ENCODE measurements at regions of chr2 and their contacts with region 1.

Region 1: DNA sequence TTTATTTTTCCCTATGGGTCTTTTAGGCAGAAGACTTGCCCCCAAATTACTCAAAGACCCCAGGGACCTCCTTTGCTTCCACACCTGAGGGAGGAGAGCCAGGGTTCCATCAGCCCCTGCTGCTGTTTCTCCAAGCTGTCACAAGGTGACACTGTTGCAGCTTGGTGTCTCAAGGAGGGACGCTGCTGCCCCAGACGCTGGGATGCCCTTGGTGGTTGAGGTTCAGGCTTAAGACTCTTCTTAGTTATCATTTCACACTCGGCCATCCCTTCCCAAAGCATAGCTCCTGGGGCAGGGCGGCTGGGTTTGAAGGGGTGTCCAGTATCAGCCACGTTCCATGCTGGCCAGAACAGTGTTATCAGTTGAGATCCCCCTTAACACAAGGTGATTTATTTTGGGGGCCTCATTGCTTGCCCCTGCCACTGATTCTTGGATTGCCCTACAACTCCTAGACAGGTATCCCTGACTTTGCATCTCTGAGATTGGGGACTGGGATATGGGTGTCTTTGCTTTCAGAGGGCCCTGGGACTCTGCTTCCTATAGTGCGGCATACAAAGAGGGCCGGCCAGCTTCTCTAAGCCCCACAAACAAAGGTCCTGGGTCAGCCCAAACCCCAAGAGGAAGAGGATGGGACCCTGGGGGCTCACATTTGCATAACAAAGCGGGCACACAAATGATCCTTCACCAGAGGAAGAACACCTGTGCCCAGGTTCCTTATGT is 22.7 kb downstream of the GPR55 start:
- DNase-seq: peak; percentile 19
- ATAC-seq: peak; percentile 90
- H3K4me3 Mint-ChIP-seq: no peak overlapping the region
- H3K27ac Mint-ChIP-seq: no peak overlapping the region
- H3K4me1 Mint-ChIP-seq: peaks cover 18% of the 10 kb centered on the region
- H3K27me3 Mint-ChIP-seq: no peaks in the 10 kb centered on the region
- CTCF ChIP-seq: no peak

Region 2: GRCh38 chr2:230847883-230848388 is 54.4 kb before region 1 on chr2:
- CTCF ChIA-PET with region 1: interaction called, 12 read pairs
- POLR2A ChIA-PET with region 1: no interaction called
- intact Hi-C with region 1: no loop called
- DNase-seq: peak; percentile 84
- ATAC-seq: peak; percentile 97
- H3K4me3 Mint-ChIP-seq: peak overlapping the region; percentile 50
- H3K27ac Mint-ChIP-seq: no peak overlapping the region
- H3K4me1 Mint-ChIP-seq: peaks cover 8% of the 10 kb centered on the region
- H3K27me3 Mint-ChIP-seq: peaks cover 22% of the 10 kb centered on the region
- CTCF ChIP-seq: peak; percentile 24

Region 3: DNA sequence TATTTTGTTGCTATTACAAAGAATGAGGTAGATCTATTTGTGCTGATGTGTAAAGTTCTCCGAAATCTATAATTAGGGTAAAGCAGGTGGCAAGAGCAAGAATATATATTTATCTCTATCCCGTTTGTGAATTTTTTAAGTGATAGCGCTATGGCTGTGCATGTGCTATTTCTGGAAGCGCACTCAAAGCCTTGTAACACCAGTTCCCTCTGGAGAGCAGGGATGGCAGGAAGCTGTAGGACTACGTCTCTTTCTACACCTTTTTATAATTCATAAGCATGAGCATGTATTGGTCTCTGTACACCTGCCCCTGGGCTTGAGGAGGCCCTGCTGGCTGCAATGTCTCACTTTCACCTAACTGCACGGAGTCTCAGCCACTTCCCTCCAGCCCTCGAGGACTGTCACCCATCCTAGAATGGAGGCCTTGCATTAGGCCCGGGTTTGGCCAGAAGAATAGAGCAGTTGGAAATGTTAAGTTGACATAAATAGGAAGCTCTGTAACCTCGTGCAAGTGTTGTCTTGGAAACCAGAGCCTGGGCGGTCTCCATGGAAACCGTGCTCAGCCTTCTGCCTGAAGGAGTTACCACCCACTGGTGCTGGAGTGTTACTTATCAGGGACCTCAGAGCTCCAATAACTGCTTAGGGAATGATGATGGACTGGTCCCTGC is 16.7 kb before region 1 on chr2:
- CTCF ChIA-PET with region 1: no interaction called
- POLR2A ChIA-PET with region 1: no interaction called
- intact Hi-C with region 1: no loop called
- DNase-seq: no peak
- ATAC-seq: peak; percentile 45
- H3K4me3 Mint-ChIP-seq: no peak overlapping the region
- H3K27ac Mint-ChIP-seq: no peak overlapping the region
- H3K4me1 Mint-ChIP-seq: peaks cover 23% of the 10 kb centered on the region
- H3K27me3 Mint-ChIP-seq: peaks cover 3% of the 10 kb centered on the region
- CTCF ChIP-seq: no peak

Region 4: GRCh38 chr2:230924470-230925341 is 22.4 kb after region 1 on chr2 and contains the start of gene GPR55:
- CTCF ChIA-PET with region 1: interaction called, 4 read pairs
- POLR2A ChIA-PET with region 1: no interaction called
- intact Hi-C with region 1: loop called (anchors 2 kb)
- DNase-seq: peak; percentile 18
- ATAC-seq: peak; percentile 81
- H3K4me3 Mint-ChIP-seq: peak within 1 kb of the TSS; percentile 80
- H3K27ac Mint-ChIP-seq: peak within 1 kb of the TSS; percentile 79
- H3K4me1 Mint-ChIP-seq: peaks cover 40% of the 10 kb centered on the region
- H3K27me3 Mint-ChIP-seq: no peaks in the 10 kb centered on the region
- CTCF ChIP-seq: no peak
- total RNA-seq, gene GPR55: 4.5 and 6.3 TPM in 2 replicates

Region 5: DNA sequence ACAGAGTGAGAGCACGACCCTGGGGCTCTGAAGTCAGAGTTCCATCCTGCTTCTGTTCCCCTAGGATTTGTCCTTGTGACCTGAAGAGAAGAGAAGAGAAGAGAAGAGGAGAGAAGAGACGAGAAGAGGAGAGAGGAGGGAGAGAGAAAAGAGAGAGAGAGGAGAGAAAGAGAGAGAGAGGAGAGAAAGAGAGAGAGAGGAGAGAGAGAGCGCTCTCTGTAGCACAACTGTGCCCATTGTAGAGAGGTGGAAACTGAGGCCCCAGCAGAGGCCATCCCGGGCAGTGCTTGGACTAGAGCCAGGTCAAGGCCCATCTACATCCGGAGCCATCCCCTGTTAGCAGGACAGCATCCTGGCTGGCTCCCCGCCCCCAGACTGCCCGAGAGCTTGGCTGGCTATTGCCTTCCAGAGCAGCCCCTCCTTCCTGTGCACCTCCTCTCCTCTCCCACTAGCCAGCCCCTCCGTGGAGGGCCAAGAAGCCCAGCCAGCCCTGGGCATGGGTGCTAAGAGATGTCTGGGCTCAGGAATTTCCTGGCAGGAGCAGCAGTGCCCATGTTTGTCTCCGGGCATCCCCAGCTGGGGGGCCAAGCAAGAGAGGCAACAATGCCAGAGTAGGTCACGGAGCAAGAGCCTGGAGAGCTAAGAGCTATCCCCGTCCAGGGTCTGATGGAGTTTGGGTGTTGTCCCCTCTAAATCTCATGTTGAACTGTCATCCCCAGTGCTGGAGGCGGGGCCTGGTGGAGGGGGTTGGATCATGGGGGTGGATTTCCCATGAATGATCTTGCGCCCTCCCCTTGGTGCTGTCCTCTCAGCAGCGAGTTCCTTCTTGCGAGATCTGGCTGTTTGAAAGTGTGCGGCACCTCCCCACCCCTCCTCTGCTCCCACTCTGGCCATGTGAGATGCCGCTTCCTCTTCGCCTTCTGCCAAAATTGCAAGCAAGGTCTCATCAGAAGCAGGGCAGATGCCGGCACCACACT is 40.9 kb after region 1 on chr2:
- CTCF ChIA-PET with region 1: no interaction called
- POLR2A ChIA-PET with region 1: no interaction called
- intact Hi-C with region 1: loop called (anchors 5 kb)
- DNase-seq: no peak
- ATAC-seq: peak; percentile 83
- H3K4me3 Mint-ChIP-seq: peak overlapping the region; percentile 70
- H3K27ac Mint-ChIP-seq: peak overlapping the region; percentile 80
- H3K4me1 Mint-ChIP-seq: peaks cover 21% of the 10 kb centered on the region
- H3K27me3 Mint-ChIP-seq: peaks cover 11% of the 10 kb centered on the region
- CTCF ChIP-seq: no peak

Region 6: DNA sequence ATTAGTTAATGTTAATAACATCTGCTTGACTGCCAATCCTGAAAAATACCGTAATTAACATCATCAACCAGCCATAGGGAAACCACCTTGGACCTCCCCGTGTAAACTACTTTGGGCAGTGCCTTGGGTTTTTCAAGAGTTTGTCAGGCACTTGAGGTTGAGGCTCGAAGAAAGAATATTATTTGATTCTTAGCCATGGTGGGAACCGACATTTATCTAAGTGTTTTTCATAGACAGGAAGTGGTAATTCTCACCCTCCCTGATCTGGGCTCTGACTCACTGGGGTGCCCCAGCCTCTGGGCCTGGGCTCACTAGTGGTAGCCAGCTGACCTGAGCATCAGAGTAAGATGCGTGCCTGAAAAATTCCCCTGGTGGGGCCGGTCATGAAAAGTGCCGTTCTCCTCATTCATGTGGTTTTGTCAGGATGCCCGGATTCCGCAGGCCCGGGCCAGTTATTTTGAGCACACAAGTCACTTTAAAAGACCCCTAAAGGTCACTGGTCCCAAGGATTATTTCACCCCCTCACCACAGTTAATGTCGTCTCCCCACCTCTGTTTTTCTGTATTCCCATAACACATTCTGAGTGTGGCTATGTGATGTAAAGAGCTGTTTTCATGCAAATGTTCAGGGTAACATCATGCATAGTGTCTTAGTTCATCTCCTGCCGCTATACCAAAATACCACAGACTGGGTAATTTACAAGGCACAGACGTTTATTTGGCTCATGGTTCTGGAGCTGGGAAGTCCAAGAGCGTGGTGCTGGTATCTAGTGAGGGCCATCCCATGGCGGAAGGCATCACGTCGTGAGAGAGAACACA is 72.0 kb after region 1 on chr2:
- CTCF ChIA-PET with region 1: no interaction called
- POLR2A ChIA-PET with region 1: no interaction called
- intact Hi-C with region 1: no loop called
- DNase-seq: peak; percentile 43
- ATAC-seq: peak; percentile 88
- H3K4me3 Mint-ChIP-seq: peak overlapping the region; percentile 60
- H3K27ac Mint-ChIP-seq: peak overlapping the region; percentile 92
- H3K4me1 Mint-ChIP-seq: peaks cover 44% of the 10 kb centered on the region
- H3K27me3 Mint-ChIP-seq: peaks cover 2% of the 10 kb centered on the region
- CTCF ChIP-seq: no peak

Region 7: GRCh38 chr2:231056453-231057424 is 154.4 kb after region 1 on chr2 and contains the start of gene PSMD1:
- CTCF ChIA-PET with region 1: interaction called, 3 read pairs
- POLR2A ChIA-PET with region 1: no interaction called
- intact Hi-C with region 1: loop called (anchors 2 kb)
- DNase-seq: peak; percentile 90
- ATAC-seq: peak; percentile 85
- H3K4me3 Mint-ChIP-seq: peak within 1 kb of the TSS; percentile 98
- H3K27ac Mint-ChIP-seq: peak within 1 kb of the TSS; percentile 100
- H3K4me1 Mint-ChIP-seq: peaks cover 43% of the 10 kb centered on the region
- H3K27me3 Mint-ChIP-seq: peaks cover 3% of the 10 kb centered on the region
- CTCF ChIP-seq: peak; percentile 65
- total RNA-seq, gene PSMD1: 99.9 and 105 TPM in 2 replicates